Activated B cell treated with CpG ODN at 0.5 μM for 24 hours (primary cell): ENCODE measurements at regions of chr3 and their contacts with region 1.

Region 1: GRCh38 chr3:30042274-30042859 is 564.0 kb upstream of the TGFBR2 start:
- DNase-seq: no peak
- ATAC-seq: no peak
- H3K4me3 Mint-ChIP-seq: no peak overlapping the region
- H3K27ac Mint-ChIP-seq: no peak overlapping the region
- H3K4me1 Mint-ChIP-seq: no peaks in the 10 kb centered on the region
- H3K27me3 Mint-ChIP-seq: peaks cover 7% of the 10 kb centered on the region
- CTCF ChIP-seq: no peak

Region 2: DNA sequence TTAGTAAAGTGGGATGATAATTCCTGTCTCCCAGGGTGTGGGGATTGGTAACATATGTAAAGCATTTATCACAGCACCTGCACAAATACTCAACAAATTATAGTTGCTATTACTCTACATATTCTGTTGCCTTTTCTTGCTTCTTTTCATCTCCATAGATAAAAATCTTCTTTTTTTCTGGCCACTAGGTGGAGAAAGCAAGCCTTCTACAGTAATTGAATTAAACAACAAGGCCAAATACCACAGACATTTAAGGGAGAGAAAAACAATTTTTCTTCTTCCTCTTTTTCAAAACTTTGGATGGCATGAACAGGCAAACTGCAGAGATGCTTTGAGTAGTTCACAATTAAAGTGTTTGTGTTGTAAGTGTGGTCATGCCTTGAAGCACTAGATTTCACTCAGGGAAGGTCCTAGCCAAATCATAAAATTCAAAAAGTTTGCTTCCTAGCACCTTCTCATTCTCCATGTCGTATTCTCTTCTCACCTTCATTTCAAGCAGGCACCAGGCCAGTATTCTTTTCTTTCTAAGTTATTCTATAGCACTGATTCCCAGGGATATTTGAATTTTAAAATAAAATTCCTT is 70.6 kb after region 1 on chr3:
- CTCF ChIA-PET with region 1: interaction called, 5 read pairs
- POLR2A ChIA-PET with region 1: no interaction called
- intact Hi-C with region 1: loop called (anchors 1 kb)
- DNase-seq: no peak
- ATAC-seq: no peak
- H3K4me3 Mint-ChIP-seq: no peak overlapping the region
- H3K27ac Mint-ChIP-seq: no peak overlapping the region
- H3K4me1 Mint-ChIP-seq: peaks cover 10% of the 10 kb centered on the region
- H3K27me3 Mint-ChIP-seq: no peaks in the 10 kb centered on the region
- CTCF ChIP-seq: no peak

Region 3: DNA sequence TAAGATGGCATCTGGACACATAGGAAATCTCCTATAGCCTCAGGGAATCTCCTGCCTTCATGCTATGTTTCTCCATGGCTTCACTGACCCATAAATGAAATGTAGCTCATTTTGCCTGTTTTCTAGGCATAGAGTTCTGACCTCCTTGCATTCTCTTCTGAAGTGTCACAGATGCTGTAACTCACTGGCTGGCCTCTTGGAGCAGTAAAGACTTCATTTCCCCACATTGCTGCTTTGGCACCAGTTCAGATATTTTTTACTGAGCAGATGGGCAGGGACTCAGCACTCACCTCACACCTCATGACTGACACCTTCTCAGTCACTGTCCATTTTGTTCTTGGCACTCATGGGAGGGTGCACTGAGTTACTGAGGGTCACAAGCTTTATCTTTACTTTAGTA is 277.3 kb after region 1 on chr3:
- CTCF ChIA-PET with region 1: no interaction called
- POLR2A ChIA-PET with region 1: no interaction called
- intact Hi-C with region 1: loop called (anchors 10 kb)
- DNase-seq: no peak
- ATAC-seq: peak; percentile 98
- H3K4me3 Mint-ChIP-seq: no peak overlapping the region
- H3K27ac Mint-ChIP-seq: no peak overlapping the region
- H3K4me1 Mint-ChIP-seq: peaks cover 6% of the 10 kb centered on the region
- H3K27me3 Mint-ChIP-seq: no peaks in the 10 kb centered on the region
- CTCF ChIP-seq: peak; percentile 46

Region 4: GRCh38 chr3:30751610-30752299 is 709.4 kb after region 1 on chr3:
- CTCF ChIA-PET with region 1: interaction called, 42 read pairs
- POLR2A ChIA-PET with region 1: interaction called, 3 read pairs
- intact Hi-C with region 1: loop called (anchors 1 kb)
- DNase-seq: peak; percentile 20
- ATAC-seq: peak; percentile 72
- H3K4me3 Mint-ChIP-seq: no peak overlapping the region
- H3K27ac Mint-ChIP-seq: no peak overlapping the region
- H3K4me1 Mint-ChIP-seq: peaks cover 9% of the 10 kb centered on the region
- H3K27me3 Mint-ChIP-seq: peaks cover 7% of the 10 kb centered on the region
- CTCF ChIP-seq: no peak

Region 5: DNA sequence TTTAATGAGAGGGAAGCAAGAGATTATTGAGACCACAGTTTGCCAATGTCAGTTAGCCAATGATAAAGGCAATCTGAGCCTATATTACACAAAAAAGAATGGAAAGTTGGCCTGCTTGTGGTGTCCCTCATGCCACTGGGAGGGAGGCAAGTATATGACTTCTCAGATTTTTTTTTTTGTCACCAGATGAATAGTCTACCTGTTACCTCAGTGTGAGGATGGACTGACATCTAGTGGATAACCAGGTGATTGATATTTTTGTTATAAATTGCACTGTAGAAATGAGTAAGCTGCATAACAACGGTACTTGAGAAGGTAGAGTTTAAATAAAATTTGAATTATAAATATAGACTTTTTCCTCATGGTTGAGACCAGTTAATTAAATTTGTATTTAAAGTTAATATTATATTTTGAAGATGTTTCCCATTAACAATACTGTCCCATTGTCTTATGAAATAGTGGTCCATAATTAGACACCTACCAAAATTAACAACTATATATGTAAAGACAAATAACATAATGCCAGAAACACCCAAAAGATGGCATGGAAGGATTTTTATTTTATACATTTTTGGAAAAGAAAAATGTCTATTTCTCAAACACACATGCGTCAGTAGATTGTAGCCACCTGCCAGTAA is 1089.9 kb after region 1 on chr3:
- CTCF ChIA-PET with region 1: interaction called, 9 read pairs
- POLR2A ChIA-PET with region 1: no interaction called
- intact Hi-C with region 1: loop called (anchors 1 kb)
- DNase-seq: no peak
- ATAC-seq: no peak
- H3K4me3 Mint-ChIP-seq: no peak overlapping the region
- H3K27ac Mint-ChIP-seq: no peak overlapping the region
- H3K4me1 Mint-ChIP-seq: no peaks in the 10 kb centered on the region
- H3K27me3 Mint-ChIP-seq: no peaks in the 10 kb centered on the region
- CTCF ChIP-seq: peak; percentile 14